Adrenal gland (tissue), 19 donors: ENCODE measurements at regions of chr18 and their contacts with region 1.

Region 1: GRCh38 chr18:54261894-54262293 is 7.4 kb upstream of the POLI start:
- DNase-seq: peak in 1 of 7 donors; percentile 16
- H3K4me3 ChIP-seq: no peak overlapping the region
- H3K27ac ChIP-seq: peak overlapping the region in 1 of 5 donors; percentile 17
- H3K4me1 ChIP-seq: peaks cover 0 to 4% of the 10 kb centered on the region in 2 donors
- H3K27me3 ChIP-seq: no peaks in the 10 kb centered on the region
- CTCF ChIP-seq: no peak
- POLR2A ChIP-seq: no peak

Region 2: DNA sequence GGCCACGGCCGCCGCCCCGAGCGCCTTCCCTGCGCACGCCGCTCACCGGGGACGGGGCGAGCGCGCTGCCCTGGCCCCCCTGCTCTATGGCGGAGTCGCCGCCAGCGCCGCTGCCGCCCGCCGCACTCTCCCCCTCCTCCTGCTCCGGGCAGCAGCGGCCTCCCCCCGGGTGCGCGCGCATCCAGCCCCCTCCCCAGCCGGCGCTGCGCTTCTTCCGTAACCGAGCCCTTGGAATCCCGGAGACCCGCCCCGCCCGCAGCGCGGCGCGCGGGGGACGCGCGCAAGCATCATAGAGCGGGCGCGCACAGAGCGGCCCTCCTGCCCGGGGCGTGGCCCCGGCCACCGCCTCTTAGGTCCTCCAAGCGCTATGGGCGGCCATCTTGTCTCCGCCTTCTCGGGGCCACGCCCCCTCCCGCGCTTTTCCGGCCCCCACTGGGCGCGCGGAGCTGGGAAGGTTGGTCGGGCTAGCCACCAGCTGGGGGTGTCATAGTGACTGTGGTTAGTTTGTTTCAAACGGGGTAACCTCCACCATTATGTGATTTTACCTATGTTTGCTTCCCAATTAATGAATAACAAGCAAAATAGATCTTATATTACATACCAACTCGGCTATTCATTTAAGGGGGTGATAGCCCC is 37.4 kb before region 1 on chr18 and contains the start of gene MBD2:
- intact Hi-C with region 1: loop called in 1 of 2 experiments (anchors 5 kb)
- DNase-seq: peak; percentile 93 to 97 (median 94)
- H3K4me3 ChIP-seq: peak within 1 kb of the TSS in 3 of 4 donors; percentile 33 to 98 (median 87)
- H3K27ac ChIP-seq: peak within 1 kb of the TSS in 4 of 5 donors; percentile 68 to 97 (median 79)
- H3K4me1 ChIP-seq: peaks cover 27 to 40% of the 10 kb centered on the region in 2 donors
- H3K27me3 ChIP-seq: no peaks in the 10 kb centered on the region
- CTCF ChIP-seq: peak in 2 of 6 experiments; percentile 7 to 8
- POLR2A ChIP-seq: peak; percentile 35 to 70
- total RNA-seq, gene MBD2: 13.5 to 70.8 (median 27.8) TPM

Region 3: GRCh38 chr18:54335638-54336173 is 73.8 kb after region 1 on chr18:
- intact Hi-C with region 1: no loop called
- DNase-seq: no peak
- H3K4me3 ChIP-seq: no peak overlapping the region
- H3K27ac ChIP-seq: no peak overlapping the region
- H3K4me1 ChIP-seq: no peaks in the 10 kb centered on the region
- H3K27me3 ChIP-seq: no peaks in the 10 kb centered on the region
- CTCF ChIP-seq: no peak
- POLR2A ChIP-seq: no peak

Region 4: GRCh38 chr18:54702686-54703085 is 440.8 kb after region 1 on chr18:
- intact Hi-C with region 1: no loop called
- DNase-seq: no peak
- H3K4me3 ChIP-seq: no peak overlapping the region
- H3K27ac ChIP-seq: no peak overlapping the region
- H3K4me1 ChIP-seq: no peaks in the 10 kb centered on the region
- H3K27me3 ChIP-seq: no peaks in the 10 kb centered on the region
- CTCF ChIP-seq: no peak
- POLR2A ChIP-seq: no peak